ENCODE measurements at regions of chr1 and their contacts with region 1.

Region 1: DNA sequence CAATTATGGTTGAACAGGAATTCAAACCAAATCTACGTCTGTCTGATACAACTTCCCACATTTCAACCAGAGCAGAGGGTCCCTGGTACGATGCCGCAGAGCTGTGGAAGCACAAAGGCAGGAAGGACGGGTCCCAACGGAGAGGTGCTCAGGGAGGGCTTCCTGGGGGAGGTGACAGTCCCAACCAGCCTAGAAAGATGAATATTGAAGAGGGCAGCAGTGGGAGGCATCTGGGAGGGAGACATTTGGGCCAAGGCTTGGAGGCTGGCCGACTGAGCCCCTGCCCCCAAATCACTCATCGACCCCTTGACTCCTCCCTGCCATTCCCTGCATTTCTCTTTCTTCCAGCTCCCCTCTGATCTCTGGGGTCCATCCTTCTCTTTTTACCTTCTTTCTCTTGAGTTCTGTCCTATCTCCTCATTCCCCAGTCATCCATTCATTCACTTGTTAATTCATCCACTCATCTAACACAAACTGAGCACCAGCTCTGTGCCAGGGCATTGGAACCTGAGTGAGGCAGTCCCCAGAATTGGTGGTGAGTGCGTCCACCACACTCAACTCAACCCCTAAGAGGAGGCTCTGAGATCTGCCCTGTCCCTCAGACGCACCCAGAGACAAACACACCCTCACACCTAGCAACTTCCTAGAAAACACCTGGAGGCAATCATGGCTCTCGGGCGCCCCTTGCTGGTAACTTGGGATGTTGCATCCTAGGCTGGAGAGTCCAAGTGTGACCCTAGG is 13.2 kb upstream of the CELA3B start:
- DNase-seq: no peak
- H3K4me3 ChIP-seq: no peak overlapping the region
- H3K27ac ChIP-seq: no peak overlapping the region
- H3K4me1 ChIP-seq: peaks cover 0 to 31% (median 8%) of the 10 kb centered on the region in 3 donors
- H3K27me3 ChIP-seq: no peaks in the 10 kb centered on the region
- CTCF ChIP-seq: peak; percentile 85 to 95 (median 90)
- POLR2A ChIP-seq: no peak

Region 2: GRCh38 chr1:21703318-21703963 is 260.2 kb before region 1 on chr1:
- intact Hi-C with region 1: loop called (anchors 10 kb)
- DNase-seq: no peak
- H3K4me3 ChIP-seq: no peak overlapping the region
- H3K27ac ChIP-seq: no peak overlapping the region
- H3K4me1 ChIP-seq: peaks cover 0 to 4% (median 0%) of the 10 kb centered on the region in 3 donors
- H3K27me3 ChIP-seq: no peaks in the 10 kb centered on the region
- CTCF ChIP-seq: peak in 4 of 6 experiments; percentile 32 to 53 (median 42)
- POLR2A ChIP-seq: no peak

Region 3: GRCh38 chr1:22204941-22205913 is 241.6 kb after region 1 on chr1:
- intact Hi-C with region 1: no loop called
- DNase-seq: no peak
- H3K4me3 ChIP-seq: no peak overlapping the region
- H3K27ac ChIP-seq: no peak overlapping the region
- H3K4me1 ChIP-seq: peaks cover 0 to 24% (median 0%) of the 10 kb centered on the region in 3 donors
- H3K27me3 ChIP-seq: peaks cover 0 to 72% (median 0%) of the 10 kb centered on the region in 4 donors
- CTCF ChIP-seq: no peak
- POLR2A ChIP-seq: no peak